Ascending aorta (tissue), 2 donors: ENCODE measurements at regions of chr9 and their contacts with region 1.

Region 1: DNA sequence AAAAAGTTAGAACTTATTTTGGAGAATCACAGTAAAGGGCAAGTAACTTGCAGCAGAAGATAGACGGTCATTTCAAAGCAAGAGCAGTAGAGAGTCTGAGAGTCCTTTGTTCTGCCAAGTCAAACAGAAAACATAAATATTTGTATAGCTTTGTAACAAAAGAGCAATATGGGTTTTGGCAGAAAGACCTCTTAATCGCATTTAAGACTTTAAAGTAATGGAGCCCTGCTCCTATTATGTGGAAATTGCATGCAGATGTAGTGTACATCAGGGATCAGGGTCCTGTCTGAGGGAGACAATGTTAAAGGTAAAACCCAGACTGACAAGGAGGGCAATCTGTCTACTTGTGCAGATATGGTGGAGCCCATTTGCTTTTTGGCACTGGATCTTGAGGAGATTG is 87.2 kb downstream of the PGM5 start:
- DNase-seq: no peak
- H3K4me3 ChIP-seq: no peak overlapping the region
- H3K27ac ChIP-seq: no peak overlapping the region
- H3K4me1 ChIP-seq: peaks cover 0 to 17% of the 10 kb centered on the region in 2 donors
- H3K27me3 ChIP-seq: no peaks in the 10 kb centered on the region
- CTCF ChIP-seq: no peak

Region 2: DNA sequence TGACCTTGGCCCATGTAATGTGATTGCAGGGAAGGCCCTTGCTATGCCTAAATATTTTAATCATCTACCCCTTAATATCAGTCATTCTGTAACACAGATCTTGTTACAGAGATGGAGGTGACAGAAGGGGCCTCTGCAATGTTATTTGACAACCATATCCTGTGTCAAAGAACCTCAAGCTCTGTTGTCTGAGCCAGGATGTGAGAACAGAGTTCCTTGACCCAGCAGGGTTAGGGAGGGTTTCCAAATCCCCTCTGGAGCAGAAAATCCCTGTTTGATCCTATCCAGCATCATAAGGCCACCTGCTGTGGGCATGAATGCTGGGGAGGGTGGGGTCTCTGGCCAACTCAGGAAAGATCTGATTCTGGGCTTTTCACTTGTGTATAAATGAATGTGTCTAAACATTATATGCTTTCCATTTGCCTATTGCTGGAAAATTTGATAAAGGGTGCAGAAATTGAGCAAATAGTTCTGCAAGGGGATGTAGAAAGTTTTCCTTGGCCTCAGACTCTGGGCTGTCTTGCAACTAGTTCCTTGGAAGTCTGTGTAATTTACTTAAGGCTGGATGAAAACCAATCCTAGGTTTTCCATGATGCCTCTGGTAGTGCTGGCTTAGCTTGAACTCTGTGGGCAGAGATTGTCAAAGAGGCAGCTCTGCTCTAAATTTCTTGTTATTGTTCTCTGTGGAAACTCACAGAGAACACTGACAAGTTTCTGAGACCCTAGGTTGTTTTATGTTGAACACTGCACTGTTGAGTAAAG is 16.2 kb before region 1 on chr9:
- intact Hi-C with region 1: loop called (anchors 2 kb)
- DNase-seq: no peak
- H3K4me3 ChIP-seq: no peak overlapping the region
- H3K27ac ChIP-seq: peak overlapping the region; percentile 63 to 80
- H3K4me1 ChIP-seq: peaks cover 10 to 30% of the 10 kb centered on the region in 2 donors
- H3K27me3 ChIP-seq: no peaks in the 10 kb centered on the region
- CTCF ChIP-seq: no peak

Region 3: DNA sequence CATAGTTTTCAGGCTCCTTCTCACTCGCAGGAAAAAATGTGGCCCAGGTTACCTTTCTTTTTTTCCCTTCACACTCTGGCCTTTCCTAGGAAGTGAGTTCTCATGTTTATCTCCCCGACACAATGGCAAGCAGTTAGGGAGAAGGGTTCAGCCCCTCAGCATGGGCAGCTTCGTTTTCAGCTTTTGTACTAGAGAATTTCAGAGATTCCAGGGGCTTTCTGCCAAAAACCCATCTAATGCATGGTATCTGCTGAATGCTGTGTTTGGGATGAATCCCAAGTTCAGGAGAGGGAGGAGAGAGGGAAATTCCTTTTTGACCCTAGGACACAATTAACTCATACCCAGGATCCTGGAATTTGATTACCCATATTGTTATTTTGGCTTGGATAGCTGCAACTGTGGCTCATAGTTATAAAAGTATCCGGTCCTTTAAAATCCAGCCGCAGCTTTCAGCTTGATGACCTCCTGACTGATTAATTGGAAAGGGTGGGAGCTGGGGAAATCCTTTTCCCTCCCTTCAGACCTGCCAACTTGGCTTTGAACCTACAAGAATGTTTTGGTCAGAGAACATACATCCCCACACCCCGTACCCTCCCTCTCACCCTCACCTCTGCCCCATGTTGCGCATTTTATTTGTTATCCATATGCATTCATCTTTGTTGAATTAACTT is 18.6 kb after region 1 on chr9:
- intact Hi-C with region 1: no loop called
- DNase-seq: no peak
- H3K4me3 ChIP-seq: no peak overlapping the region
- H3K27ac ChIP-seq: peak overlapping the region; percentile 55 to 76
- H3K4me1 ChIP-seq: peaks cover 0 to 11% of the 10 kb centered on the region in 2 donors
- H3K27me3 ChIP-seq: no peaks in the 10 kb centered on the region
- CTCF ChIP-seq: no peak

Region 4: GRCh38 chr9:68530618-68531017 is 87.0 kb after region 1 on chr9:
- intact Hi-C with region 1: no loop called
- DNase-seq: peak in 1 of 2 donors; percentile 78
- H3K4me3 ChIP-seq: no peak overlapping the region
- H3K27ac ChIP-seq: peak overlapping the region; percentile 9 to 43
- H3K4me1 ChIP-seq: no peaks in the 10 kb centered on the region
- H3K27me3 ChIP-seq: no peaks in the 10 kb centered on the region
- CTCF ChIP-seq: peak in 1 of 3 experiments; percentile 15

Region 5: DNA sequence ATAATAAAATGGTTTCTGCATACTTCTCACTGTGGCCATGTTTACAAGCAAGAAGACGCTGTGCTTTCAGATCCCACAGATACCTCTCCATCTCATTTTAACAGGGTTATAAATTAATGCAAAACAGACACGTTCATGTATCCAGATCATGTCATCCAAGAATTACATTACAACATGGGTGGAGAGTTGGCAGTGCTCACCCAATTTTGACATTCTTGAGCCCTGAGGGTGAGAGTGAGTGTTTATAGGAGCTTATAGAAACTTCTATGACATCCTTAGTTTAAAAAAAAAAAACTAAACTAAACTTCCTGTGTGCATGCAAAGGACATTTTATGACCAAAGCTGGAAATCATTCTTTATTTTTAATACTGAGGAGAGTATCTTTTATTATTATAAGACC is 561.2 kb after region 1 on chr9:
- intact Hi-C with region 1: no loop called
- DNase-seq: no peak
- H3K4me3 ChIP-seq: no peak overlapping the region
- H3K27ac ChIP-seq: no peak overlapping the region
- H3K4me1 ChIP-seq: no peaks in the 10 kb centered on the region
- H3K27me3 ChIP-seq: no peaks in the 10 kb centered on the region
- CTCF ChIP-seq: no peak